Dorsolateral prefrontal cortex (tissue), 120 donors: ENCODE measurements at regions of chr7 and their contacts with region 1.

Region 1: GRCh38 chr7:78226059-78226719 is 427.6 kb downstream of the PHTF2 start:
- DNase-seq: peak in 6 of 10 donors; percentile 31 to 60 (median 52)
- H3K4me3 ChIP-seq: no peak overlapping the region
- H3K27ac ChIP-seq: no peak overlapping the region
- H3K27me3 ChIP-seq: no peaks in the 10 kb centered on the region
- CTCF ChIP-seq: peak in 54 of 56 donors; percentile 24 to 66 (median 50)

Region 2: GRCh38 chr7:77525231-77525630 is 701.0 kb before region 1 on chr7:
- intact Hi-C with region 1: no loop called
- DNase-seq: no peak
- H3K4me3 ChIP-seq: no peak overlapping the region
- H3K27ac ChIP-seq: no peak overlapping the region
- H3K27me3 ChIP-seq: no peaks in the 10 kb centered on the region
- CTCF ChIP-seq: no peak

Region 3: GRCh38 chr7:77651573-77652162 is 574.5 kb before region 1 on chr7:
- intact Hi-C with region 1: no loop called
- DNase-seq: peak in 1 of 10 donors; percentile 37
- H3K4me3 ChIP-seq: no peak overlapping the region
- H3K27ac ChIP-seq: peak overlapping the region in 2 of 59 donors; percentile 1 to 37
- H3K27me3 ChIP-seq: no peaks in the 10 kb centered on the region
- CTCF ChIP-seq: peak; percentile 66 to 95 (median 82)

Region 4: GRCh38 chr7:78134256-78134655 is 91.9 kb before region 1 on chr7:
- intact Hi-C with region 1: loop called in 1 of 2 experiments (anchors 10 kb)
- DNase-seq: no peak
- H3K4me3 ChIP-seq: no peak overlapping the region
- H3K27ac ChIP-seq: peak overlapping the region in 1 of 59 donors; percentile 18
- H3K27me3 ChIP-seq: no peaks in the 10 kb centered on the region
- CTCF ChIP-seq: peak; percentile 14 to 72 (median 58)

Region 5: GRCh38 chr7:78607099-78607498 is 380.9 kb after region 1 on chr7:
- intact Hi-C with region 1: no loop called
- DNase-seq: peak in 2 of 10 donors; percentile 26 to 31
- H3K4me3 ChIP-seq: no peak overlapping the region
- H3K27ac ChIP-seq: peak overlapping the region in 17 of 59 donors; percentile 0 to 56 (median 26)
- H3K27me3 ChIP-seq: no peaks in the 10 kb centered on the region
- CTCF ChIP-seq: peak in 54 of 56 donors; percentile 11 to 65 (median 46)